Calu3 (cell line): ENCODE measurements at regions of chr1 and their contacts with region 1.

Region 1: GRCh38 chr1:229848752-229849677 is 218.0 kb upstream of the GALNT2 start:
- DNase-seq: peak; percentile 48
- H3K4me3 Mint-ChIP-seq: no peak overlapping the region
- H3K27ac Mint-ChIP-seq: no peak overlapping the region
- H3K4me1 Mint-ChIP-seq: peaks cover 7% of the 10 kb centered on the region
- H3K27me3 Mint-ChIP-seq: peaks cover 49% of the 10 kb centered on the region
- CTCF ChIP-seq: peak; percentile 75

Region 2: DNA sequence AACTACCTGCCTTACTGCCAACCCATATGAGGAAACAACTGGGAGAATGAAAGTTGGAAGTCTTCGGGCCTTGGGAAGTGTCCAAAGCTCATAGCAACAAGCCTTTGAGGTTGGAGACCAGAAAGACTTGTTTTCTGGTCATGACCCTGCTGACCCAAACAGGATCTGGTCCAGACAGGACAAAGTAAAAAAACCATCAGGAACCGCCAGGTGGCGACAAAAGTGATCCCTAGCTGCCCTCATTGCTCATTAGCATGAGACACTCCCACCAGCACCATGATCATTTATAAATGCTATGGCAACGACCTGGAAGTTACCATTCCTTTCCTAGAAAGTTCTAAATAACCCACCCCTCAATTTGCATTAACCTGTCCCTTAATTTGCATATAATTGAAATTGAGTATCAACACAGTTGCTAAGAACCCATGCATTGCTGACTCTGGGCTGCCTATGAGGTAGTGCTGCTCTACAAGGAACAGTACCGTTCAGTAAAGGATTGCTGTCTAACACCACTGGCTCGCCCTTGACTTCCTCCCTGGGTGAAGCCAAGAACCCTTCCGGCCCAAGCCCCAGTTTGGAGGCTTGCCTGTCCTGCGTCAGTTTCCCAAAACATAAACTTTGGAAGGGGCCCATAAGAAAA is 133.9 kb before region 1 on chr1:
- CTCF ChIA-PET with region 1: no interaction called
- intact Hi-C with region 1: loop called (anchors 10 kb)
- DNase-seq: peak; percentile 73
- H3K4me3 Mint-ChIP-seq: no peak overlapping the region
- H3K27ac Mint-ChIP-seq: no peak overlapping the region
- H3K4me1 Mint-ChIP-seq: no peaks in the 10 kb centered on the region
- H3K27me3 Mint-ChIP-seq: peaks cover 5% of the 10 kb centered on the region
- CTCF ChIP-seq: peak; percentile 36